ENCODE measurements at regions of chr5 and their contacts with region 1.

Region 1: GRCh38 chr5:14280294-14280854 is 137.2 kb downstream of the TRIO start:
- DNase-seq: no peak
- ATAC-seq: no peak
- H3K4me3 Mint-ChIP-seq: no peak overlapping the region
- H3K27ac Mint-ChIP-seq: no peak overlapping the region
- H3K4me1 Mint-ChIP-seq: peaks cover 6% of the 10 kb centered on the region
- H3K27me3 Mint-ChIP-seq: peaks cover 7% of the 10 kb centered on the region

Region 2: GRCh38 chr5:14270209-14270702 is 10.1 kb before region 1 on chr5:
- CTCF ChIA-PET with region 1: interaction called, 10 read pairs
- POLR2A ChIA-PET with region 1: no interaction called
- DNase-seq: no peak
- ATAC-seq: peak; percentile 55
- H3K4me3 Mint-ChIP-seq: no peak overlapping the region
- H3K27ac Mint-ChIP-seq: no peak overlapping the region
- H3K4me1 Mint-ChIP-seq: peaks cover 2% of the 10 kb centered on the region
- H3K27me3 Mint-ChIP-seq: peaks cover 14% of the 10 kb centered on the region

Region 3: DNA sequence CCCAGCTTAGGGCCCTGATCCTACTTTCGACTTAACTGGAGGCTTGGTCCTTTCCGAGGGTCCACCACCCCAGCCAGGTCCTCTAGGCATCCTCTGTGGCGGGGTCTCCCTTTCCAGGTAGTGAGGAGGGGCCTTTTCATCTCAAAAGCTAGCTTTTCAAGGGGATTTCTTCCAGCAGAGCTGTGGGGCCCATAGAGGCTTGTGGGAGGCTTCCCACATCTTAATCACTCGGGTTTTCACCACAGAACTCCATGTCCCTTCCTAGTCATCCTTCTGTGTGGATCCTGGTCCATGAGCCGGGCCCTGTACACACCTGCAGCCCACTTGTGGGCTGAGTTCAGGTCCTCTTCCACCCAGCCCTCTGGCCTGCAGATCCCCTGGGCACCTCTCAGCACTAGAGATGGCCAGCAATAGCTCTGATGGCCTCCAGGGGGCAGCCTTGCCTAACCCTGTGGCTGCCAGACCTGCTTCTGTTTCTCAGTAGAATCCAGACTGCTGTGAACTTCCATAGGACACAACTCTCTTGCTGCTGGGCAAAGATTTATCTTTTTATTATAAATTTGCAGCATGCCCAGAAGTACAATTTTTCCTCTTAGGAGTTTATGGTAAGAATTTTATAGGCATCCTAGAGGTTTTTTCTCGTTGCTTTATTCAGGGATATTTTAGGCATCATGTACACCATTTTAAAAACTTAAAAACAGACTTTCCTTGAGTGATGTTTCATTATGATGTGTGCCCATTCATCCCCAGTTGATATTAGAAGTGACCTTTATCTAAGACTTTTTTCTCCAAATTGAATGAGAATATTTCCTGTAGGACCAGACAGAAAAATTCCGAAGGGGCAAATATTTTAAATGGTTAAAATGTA is 71.7 kb after region 1 on chr5:
- CTCF ChIA-PET with region 1: no interaction called
- POLR2A ChIA-PET with region 1: no interaction called
- DNase-seq: peak; percentile 74
- ATAC-seq: peak; percentile 97
- H3K4me3 Mint-ChIP-seq: no peak overlapping the region
- H3K27ac Mint-ChIP-seq: no peak overlapping the region
- H3K4me1 Mint-ChIP-seq: peaks cover 10% of the 10 kb centered on the region
- H3K27me3 Mint-ChIP-seq: peaks cover 8% of the 10 kb centered on the region

Region 4: GRCh38 chr5:14491015-14491915 is 210.9 kb after region 1 on chr5:
- CTCF ChIA-PET with region 1: no interaction called
- POLR2A ChIA-PET with region 1: no interaction called
- DNase-seq: no peak
- ATAC-seq: no peak
- H3K4me3 Mint-ChIP-seq: no peak overlapping the region
- H3K27ac Mint-ChIP-seq: no peak overlapping the region
- H3K4me1 Mint-ChIP-seq: peaks cover 10% of the 10 kb centered on the region
- H3K27me3 Mint-ChIP-seq: no peaks in the 10 kb centered on the region